ENCODE measurements at regions of chr1 and their contacts with region 1.

Region 1: DNA sequence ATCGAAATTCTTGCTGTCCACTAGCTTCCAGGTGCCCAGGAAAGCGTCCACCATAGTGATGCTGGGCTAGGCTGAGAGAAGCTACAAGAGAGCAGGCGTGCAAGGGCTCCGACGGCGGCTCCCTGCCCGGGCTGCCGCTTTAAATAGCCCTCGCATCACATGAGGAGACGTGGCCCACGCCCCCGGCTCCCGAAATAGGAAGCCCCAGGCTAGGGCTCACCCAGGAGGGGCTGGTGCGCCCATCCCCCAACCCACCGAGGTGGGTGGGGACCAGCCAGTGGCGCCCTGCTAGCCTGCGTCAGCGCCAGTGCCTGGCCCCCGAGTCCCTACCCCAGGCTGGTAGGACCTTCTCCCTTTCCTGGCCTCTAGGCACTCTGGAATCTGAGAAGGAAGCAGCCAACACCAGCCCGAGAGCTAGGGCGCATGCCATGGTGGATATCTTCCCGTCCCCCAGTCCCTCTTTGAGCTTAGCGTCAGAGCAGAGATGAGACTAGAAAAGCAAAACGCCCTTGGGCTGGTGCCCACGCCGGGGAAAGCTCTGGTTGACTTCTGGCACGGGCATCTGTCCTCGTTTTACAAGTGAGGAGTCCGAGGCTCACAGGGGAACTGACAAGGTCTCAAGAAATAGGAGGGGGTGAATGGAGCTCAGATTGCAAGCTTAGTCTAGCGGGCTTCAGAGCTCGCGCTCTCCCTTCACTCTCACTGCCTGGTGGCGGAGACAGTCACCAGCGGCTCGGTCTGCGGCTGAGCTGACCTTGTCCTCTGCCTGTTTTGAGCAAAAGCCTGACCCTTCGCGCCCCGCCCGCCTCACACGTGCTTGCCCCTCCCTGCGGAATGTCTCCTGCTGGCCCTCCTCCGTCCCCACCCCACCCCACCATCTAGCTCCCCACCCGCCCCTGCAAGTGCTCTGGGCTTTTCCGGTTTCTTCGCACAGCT is at the start of gene FABP3:
- DNase-seq: peak; percentile 87 to 92
- H3K4me3 ChIP-seq: peak within 1 kb of the TSS; percentile 28
- H3K4me3 Mint-ChIP-seq: peak within 1 kb of the TSS; percentile 74
- H3K27ac Mint-ChIP-seq: peak within 1 kb of the TSS; percentile 93
- H3K4me1 ChIP-seq: peaks cover 33% of the 10 kb centered on the region
- H3K4me1 Mint-ChIP-seq: peaks cover 18% of the 10 kb centered on the region
- H3K27me3 ChIP-seq: no peaks in the 10 kb centered on the region
- H3K27me3 Mint-ChIP-seq: no peaks in the 10 kb centered on the region
- CTCF ChIP-seq: peak in 1 of 2 experiments; percentile 10
- total RNA-seq, gene FABP3: 12.1 and 13.0 TPM in 2 replicates

Region 2: GRCh38 chr1:31296486-31297276 is 76.5 kb before region 1 on chr1 and contains the starts of genes SNRNP40 and ZCCHC17:
- CTCF ChIA-PET with region 1: interaction called, 5 read pairs
- POLR2A ChIA-PET with region 1: interaction called, 11 read pairs
- intact Hi-C with region 1: no loop called
- DNase-seq: peak; percentile 92 to 96
- H3K4me3 ChIP-seq: peak within 1 kb of the TSS; percentile 74
- H3K4me3 Mint-ChIP-seq: no peak within 1 kb of the TSS
- H3K27ac Mint-ChIP-seq: no peak within 1 kb of the TSS
- H3K4me1 ChIP-seq: no peaks in the 10 kb centered on the region
- H3K4me1 Mint-ChIP-seq: peaks cover 9% of the 10 kb centered on the region
- H3K27me3 ChIP-seq: no peaks in the 10 kb centered on the region
- H3K27me3 Mint-ChIP-seq: no peaks in the 10 kb centered on the region
- CTCF ChIP-seq: no peak
- total RNA-seq, gene SNRNP40: 49.5 and 56.5 TPM in 2 replicates
- total RNA-seq, gene ZCCHC17: 21.4 and 24.1 TPM in 2 replicates

Region 3: GRCh38 chr1:31356427-31356826 is 16.8 kb before region 1 on chr1:
- CTCF ChIA-PET with region 1: no interaction called
- POLR2A ChIA-PET with region 1: no interaction called
- intact Hi-C with region 1: no loop called
- DNase-seq: no peak
- H3K4me3 ChIP-seq: no peak overlapping the region
- H3K4me3 Mint-ChIP-seq: no peak overlapping the region
- H3K27ac Mint-ChIP-seq: no peak overlapping the region
- H3K4me1 ChIP-seq: no peaks in the 10 kb centered on the region
- H3K4me1 Mint-ChIP-seq: no peaks in the 10 kb centered on the region
- H3K27me3 ChIP-seq: no peaks in the 10 kb centered on the region
- H3K27me3 Mint-ChIP-seq: no peaks in the 10 kb centered on the region
- CTCF ChIP-seq: no peak

Region 4: DNA sequence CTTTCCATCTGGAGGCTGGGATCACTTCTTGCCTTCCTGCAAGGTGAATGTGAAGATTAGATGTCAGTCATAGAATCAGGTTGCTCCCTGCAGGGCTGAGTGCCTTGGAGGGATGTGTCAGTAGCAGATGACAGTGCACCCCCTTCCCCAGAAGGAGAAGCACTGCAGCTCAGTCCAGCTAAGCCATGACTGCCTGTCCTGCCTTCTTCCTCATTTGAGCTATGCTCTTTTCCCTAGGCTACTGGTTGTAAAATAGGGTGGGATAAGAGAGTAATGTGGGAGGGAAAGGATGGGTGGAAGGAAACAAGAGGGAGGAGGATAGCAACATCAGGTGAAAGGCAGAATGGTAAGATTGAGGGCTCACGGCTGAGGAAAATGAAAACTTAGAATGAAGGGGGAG is 10.7 kb after region 1 on chr1:
- CTCF ChIA-PET with region 1: interaction called, 25 read pairs
- POLR2A ChIA-PET with region 1: interaction called, 12 read pairs
- intact Hi-C with region 1: no loop called
- DNase-seq: no peak
- H3K4me3 ChIP-seq: no peak overlapping the region
- H3K4me3 Mint-ChIP-seq: no peak overlapping the region
- H3K27ac Mint-ChIP-seq: peak overlapping the region; percentile 22
- H3K4me1 ChIP-seq: peaks cover 7% of the 10 kb centered on the region
- H3K4me1 Mint-ChIP-seq: peaks cover 12% of the 10 kb centered on the region
- H3K27me3 ChIP-seq: no peaks in the 10 kb centered on the region
- H3K27me3 Mint-ChIP-seq: no peaks in the 10 kb centered on the region
- CTCF ChIP-seq: no peak

Region 5: DNA sequence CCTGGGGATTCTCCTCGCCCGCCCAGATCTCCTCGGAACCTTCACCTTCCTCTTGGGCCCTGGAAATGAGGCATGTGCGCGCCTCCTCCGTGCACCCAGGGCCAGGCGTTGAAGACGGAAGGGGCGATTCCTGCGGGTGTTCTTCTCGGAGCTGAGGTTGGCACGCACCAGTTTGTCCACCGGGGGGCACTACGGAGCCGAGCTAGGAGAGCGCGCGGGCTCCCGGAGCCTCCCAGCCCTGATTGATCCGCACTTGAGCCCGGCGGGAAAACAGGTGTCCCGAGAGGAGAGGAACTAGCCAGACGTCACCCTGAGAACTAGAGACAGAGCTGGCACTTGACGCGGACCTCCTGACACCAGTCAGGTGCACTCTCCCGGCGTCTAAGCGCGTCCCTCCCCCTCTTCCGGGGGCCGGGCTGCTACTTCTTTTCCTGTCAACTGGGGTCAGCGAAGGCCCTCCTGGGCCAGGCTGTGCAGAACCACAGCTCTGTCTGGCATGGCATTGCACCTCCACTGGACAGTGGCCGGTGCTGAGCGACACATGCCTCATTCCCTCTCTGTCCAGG is 21.5 kb after region 1 on chr1:
- CTCF ChIA-PET with region 1: interaction called, 25 read pairs
- POLR2A ChIA-PET with region 1: interaction called, 33 read pairs
- intact Hi-C with region 1: loop called (anchors 1 kb)
- DNase-seq: peak; percentile 71 to 78
- H3K4me3 ChIP-seq: no peak overlapping the region
- H3K4me3 Mint-ChIP-seq: peak overlapping the region; percentile 63
- H3K27ac Mint-ChIP-seq: no peak overlapping the region
- H3K4me1 ChIP-seq: peaks cover 32% of the 10 kb centered on the region
- H3K4me1 Mint-ChIP-seq: peaks cover 14% of the 10 kb centered on the region
- H3K27me3 ChIP-seq: no peaks in the 10 kb centered on the region
- H3K27me3 Mint-ChIP-seq: no peaks in the 10 kb centered on the region
- CTCF ChIP-seq: peak; percentile 32 to 58

Region 6: GRCh38 chr1:31422505-31423319 is 49.5 kb after region 1 on chr1:
- CTCF ChIA-PET with region 1: interaction called, 9 read pairs
- POLR2A ChIA-PET with region 1: no interaction called
- intact Hi-C with region 1: loop called (anchors 1 kb)
- DNase-seq: peak; percentile 70 to 77
- H3K4me3 ChIP-seq: no peak overlapping the region
- H3K4me3 Mint-ChIP-seq: no peak overlapping the region
- H3K27ac Mint-ChIP-seq: peak overlapping the region; percentile 82
- H3K4me1 ChIP-seq: peaks cover 3% of the 10 kb centered on the region; the same call in 1 of the 2 replicates
- H3K4me1 Mint-ChIP-seq: no peaks in the 10 kb centered on the region
- H3K27me3 ChIP-seq: no peaks in the 10 kb centered on the region
- H3K27me3 Mint-ChIP-seq: no peaks in the 10 kb centered on the region
- CTCF ChIP-seq: peak; percentile 71 to 78

Region 7: DNA sequence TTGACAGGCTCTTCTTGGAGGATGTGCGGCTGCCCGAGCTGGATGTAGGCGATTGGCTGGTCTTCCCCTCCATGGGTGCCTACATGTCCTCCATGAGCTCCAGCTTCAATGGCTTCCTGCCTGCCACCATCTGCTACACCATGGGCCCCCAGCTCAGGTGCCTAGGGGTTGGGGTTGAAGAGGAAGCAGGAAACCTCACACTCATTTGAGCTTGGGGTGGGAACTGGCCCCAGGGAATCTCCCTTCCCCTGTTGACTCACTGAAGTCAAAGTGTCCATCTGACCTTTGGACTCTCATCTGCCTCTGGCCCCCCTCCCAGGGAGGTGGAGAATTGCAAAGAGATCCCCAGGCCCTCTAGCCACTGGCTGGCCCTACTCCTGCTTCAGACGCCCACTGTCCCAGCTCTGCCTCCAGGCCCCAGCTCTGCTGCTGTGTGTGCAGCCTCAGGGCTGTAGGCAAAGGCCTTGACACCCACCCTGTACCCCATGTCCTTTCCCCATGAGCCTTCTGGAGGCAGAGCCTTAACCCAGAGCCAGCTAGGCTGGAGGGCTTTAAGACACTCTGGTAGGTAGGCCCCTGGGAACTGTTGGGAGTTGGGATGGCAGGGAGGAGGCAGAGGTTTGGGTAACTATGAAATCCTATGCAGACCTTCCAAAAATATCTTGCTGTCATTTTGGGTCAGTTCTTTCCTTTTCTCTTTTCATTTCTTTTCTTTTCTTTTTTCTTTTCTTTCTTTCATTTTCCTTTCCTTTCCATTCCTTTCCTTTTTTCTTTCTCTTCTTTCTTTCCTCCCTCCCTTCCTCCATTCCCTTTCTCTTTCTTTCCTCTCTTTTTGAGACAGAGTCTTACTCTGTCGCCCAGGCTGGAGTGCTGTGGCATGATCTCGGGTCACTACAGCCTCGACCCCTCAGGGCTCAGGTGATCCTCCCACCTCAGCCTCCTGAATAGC is 136.2 kb after region 1 on chr1:
- CTCF ChIA-PET with region 1: interaction called, 3 read pairs
- POLR2A ChIA-PET with region 1: interaction called, 10 read pairs
- intact Hi-C with region 1: no loop called
- DNase-seq: peak; percentile 76 to 84
- H3K4me3 ChIP-seq: no peak overlapping the region
- H3K4me3 Mint-ChIP-seq: peak overlapping the region; percentile 11
- H3K27ac Mint-ChIP-seq: peak overlapping the region; percentile 81
- H3K4me1 ChIP-seq: peaks cover 50% of the 10 kb centered on the region
- H3K4me1 Mint-ChIP-seq: peaks cover 45% of the 10 kb centered on the region
- H3K27me3 ChIP-seq: no peaks in the 10 kb centered on the region
- H3K27me3 Mint-ChIP-seq: no peaks in the 10 kb centered on the region
- CTCF ChIP-seq: no peak

Measured in Caco-2 (cell line).